ENCODE measurements at regions of chr2 and their contacts with region 1.

Region 1: DNA sequence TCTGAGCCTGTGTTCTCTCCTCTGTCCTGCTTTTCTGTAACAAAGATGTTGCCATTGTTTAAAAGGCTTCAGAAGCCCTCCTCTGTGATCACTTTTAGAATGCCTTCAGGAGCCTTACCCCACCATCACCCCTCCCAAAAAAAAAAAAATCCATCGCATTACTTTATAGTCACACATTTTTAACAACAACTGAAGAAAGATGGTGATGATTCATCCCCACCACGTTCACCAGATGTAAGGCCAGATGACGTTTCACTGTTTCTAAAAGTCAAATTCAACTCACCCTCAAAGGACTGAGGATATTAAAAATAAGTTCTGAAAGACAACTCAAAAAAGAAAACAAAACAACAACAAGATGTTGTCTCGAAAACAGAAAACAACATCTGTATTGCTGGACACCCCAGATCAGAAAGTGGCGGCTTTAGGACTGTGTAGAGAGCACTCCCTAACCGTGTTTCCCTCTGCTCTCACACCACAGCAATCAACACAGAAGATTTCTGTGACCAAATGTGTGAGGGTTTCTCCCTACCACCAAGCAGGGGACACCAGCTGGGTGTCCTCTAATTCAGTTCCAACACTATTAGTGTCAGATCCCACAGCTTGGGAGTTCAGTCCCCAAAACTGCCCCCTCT is 61.9 kb upstream of the CREB1 start:
- DNase-seq: no peak
- H3K4me3 ChIP-seq: no peak overlapping the region
- H3K27ac ChIP-seq: no peak overlapping the region
- H3K4me1 ChIP-seq: peaks cover 3% of the 10 kb centered on the region
- H3K27me3 ChIP-seq: no peaks in the 10 kb centered on the region
- CTCF ChIP-seq: no peak

Region 2: GRCh38 chr2:206915121-206915520 is 552.7 kb before region 1 on chr2:
- intact Hi-C with region 1: no loop called
- DNase-seq: no peak
- H3K4me3 ChIP-seq: no peak overlapping the region
- H3K27ac ChIP-seq: no peak overlapping the region
- H3K4me1 ChIP-seq: no peaks in the 10 kb centered on the region
- H3K27me3 ChIP-seq: no peaks in the 10 kb centered on the region
- CTCF ChIP-seq: no peak

Region 3: GRCh38 chr2:207176247-207176646 is 291.6 kb before region 1 on chr2:
- intact Hi-C with region 1: loop called (anchors 10 kb)
- DNase-seq: no peak
- H3K4me3 ChIP-seq: no peak overlapping the region
- H3K27ac ChIP-seq: no peak overlapping the region
- H3K4me1 ChIP-seq: no peaks in the 10 kb centered on the region
- H3K27me3 ChIP-seq: no peaks in the 10 kb centered on the region
- CTCF ChIP-seq: no peak